ENCODE measurements at regions of chrX and their contacts with region 1.

Region 1: GRCh38 chrX:24983931-24984330 is 31.8 kb downstream of the ARX start:
- DNase-seq: no peak

Region 2: DNA sequence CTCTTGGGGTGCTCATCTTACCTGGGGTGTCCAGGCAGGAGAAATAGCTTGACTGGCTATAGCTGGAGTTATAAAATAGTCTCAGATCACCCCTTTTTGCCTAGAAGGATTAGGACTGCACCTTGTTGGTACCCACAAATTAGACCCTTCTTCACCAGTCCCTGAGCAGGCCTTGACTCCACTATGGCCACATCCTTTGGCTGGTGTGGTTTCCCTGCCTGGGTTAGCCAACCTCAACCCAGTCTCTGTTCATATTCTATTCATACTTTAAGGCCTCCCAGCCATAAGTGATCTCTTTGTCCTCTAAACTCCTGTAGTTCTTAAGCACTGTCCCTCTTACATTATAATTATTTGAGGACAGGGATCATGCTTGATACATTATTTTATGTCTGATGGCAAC is 37.6 kb before region 1 on chrX:
- intact Hi-C with region 1: loop called in 1 of 2 experiments (anchors 2 kb)
- DNase-seq: no peak

Region 3: GRCh38 chrX:24956828-24957227 is 27.1 kb before region 1 on chrX:
- intact Hi-C with region 1: no loop called
- DNase-seq: no peak

Measured in posterior vena cava (tissue), 2 donors.